ENCODE measurements at regions of chr4 and their contacts with region 1.

Region 1: DNA sequence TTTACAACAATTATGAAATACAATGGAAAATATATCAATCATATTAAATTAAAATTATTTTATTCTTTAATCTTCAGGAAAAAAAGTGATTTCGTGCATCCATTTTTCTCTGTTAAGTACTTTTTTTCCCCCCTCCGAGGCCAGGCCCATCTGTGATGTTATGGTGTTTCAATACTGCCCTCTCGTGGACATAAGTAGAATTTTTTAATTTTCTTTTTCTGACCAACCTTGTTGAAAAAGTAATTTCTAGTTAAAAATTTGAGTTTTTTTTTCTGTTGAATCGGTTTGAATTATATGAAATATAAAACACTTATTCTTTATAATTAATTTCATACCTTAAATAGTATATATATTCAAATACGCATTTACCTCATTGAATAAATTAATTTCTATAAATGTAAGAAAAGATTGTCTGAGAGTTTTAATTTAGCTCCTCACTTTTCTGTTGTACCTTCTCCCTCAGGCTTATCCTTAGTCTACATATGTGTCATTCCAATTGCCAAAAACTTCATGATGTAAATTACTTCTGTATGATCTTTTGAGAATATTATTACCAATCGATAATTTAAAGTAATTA is 175.8 kb upstream of the TECRL start:
- DNase-seq: no peak
- H3K4me3 ChIP-seq: no peak overlapping the region
- H3K27ac ChIP-seq: no peak overlapping the region
- H3K4me1 ChIP-seq: no peaks in the 10 kb centered on the region
- H3K27me3 ChIP-seq: no peaks in the 10 kb centered on the region
- CTCF ChIP-seq: peak in 1 of 3 experiments; percentile 9
- POLR2A ChIP-seq: no peak

Region 2: DNA sequence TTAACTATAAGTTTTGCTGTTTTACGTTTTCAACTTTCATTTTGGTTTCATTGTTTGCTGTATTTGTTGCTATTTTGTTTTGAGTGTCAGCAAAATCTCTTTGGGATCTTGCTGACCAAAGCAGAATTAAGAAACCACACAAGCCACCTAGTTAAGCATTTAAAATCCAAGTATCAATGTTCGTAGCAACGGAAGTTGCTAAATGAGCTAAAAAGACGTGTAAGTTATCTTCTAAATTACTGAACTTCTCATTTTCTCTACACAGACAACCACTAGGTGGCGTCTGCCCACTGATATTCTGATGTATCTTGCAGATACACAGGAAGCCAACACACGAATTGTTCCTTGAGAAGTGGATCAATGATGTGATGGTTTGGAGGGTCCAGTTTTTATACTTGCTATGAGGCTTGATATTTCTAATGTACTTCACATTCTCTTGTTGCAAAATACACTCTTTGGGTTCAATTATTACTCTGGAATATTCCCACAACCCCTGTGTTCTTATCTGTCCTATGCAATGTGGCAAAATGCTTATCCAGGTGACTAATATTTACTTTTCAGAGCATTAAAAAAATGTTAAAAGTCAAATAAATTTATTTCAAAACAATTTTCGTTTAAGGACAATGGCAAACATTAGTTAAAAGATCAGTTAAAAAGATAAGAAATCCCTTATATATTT is 426.3 kb before region 1 on chr4:
- intact Hi-C with region 1: loop called (anchors 5 kb)
- DNase-seq: no peak
- H3K4me3 ChIP-seq: no peak overlapping the region
- H3K27ac ChIP-seq: no peak overlapping the region
- H3K4me1 ChIP-seq: no peaks in the 10 kb centered on the region
- H3K27me3 ChIP-seq: no peaks in the 10 kb centered on the region
- CTCF ChIP-seq: peak in 1 of 3 experiments; percentile 20
- POLR2A ChIP-seq: no peak

Region 3: DNA sequence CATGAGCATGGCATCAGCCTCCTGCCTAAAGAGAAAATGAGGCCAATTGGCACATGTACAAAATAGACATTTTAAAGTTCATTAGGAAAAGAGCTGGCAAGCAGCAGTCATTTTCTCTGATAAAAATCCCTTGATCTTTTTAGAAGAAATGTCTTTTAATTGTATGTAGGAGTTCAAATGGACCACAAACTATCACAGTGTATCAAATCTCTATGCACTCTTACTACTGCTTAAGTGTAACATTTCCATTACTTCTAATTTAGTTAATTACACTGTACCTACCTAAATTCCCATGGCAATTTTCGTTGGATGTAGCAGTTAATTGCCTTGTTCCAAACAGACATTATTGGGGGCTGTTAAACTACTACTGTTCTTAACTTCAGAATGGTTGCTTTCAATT is 57.9 kb after region 1 on chr4:
- intact Hi-C with region 1: no loop called
- DNase-seq: no peak
- H3K4me3 ChIP-seq: no peak overlapping the region
- H3K27ac ChIP-seq: no peak overlapping the region
- H3K4me1 ChIP-seq: no peaks in the 10 kb centered on the region
- H3K27me3 ChIP-seq: no peaks in the 10 kb centered on the region
- CTCF ChIP-seq: no peak
- POLR2A ChIP-seq: no peak

Region 4: GRCh38 chr4:65696436-65696835 is 1111.4 kb after region 1 on chr4:
- intact Hi-C with region 1: no loop called
- DNase-seq: no peak
- H3K4me3 ChIP-seq: no peak overlapping the region
- H3K27ac ChIP-seq: no peak overlapping the region
- H3K4me1 ChIP-seq: no peaks in the 10 kb centered on the region
- H3K27me3 ChIP-seq: no peaks in the 10 kb centered on the region
- CTCF ChIP-seq: no peak
- POLR2A ChIP-seq: no peak

Measured in vagina (tissue), 2 donors.